B cell (primary cell): ENCODE measurements at regions of chr19 and their contacts with region 1.

Region 1: GRCh38 chr19:14577885-14578427 is 4.9 kb upstream of the CLEC17A start:
- DNase-seq: peak; percentile 75
- ATAC-seq: peak; percentile 49
- H3K4me3 ChIP-seq: no peak overlapping the region
- H3K4me3 Mint-ChIP-seq: peak overlapping the region; percentile 74
- H3K27ac ChIP-seq: peak overlapping the region; percentile 42 to 72
- H3K27ac Mint-ChIP-seq: peak overlapping the region; percentile 94
- H3K4me1 ChIP-seq: peaks cover 65 to 82% of the 10 kb centered on the region in 2 donors
- H3K4me1 Mint-ChIP-seq: peaks cover 58% of the 10 kb centered on the region
- H3K27me3 ChIP-seq: no peaks in the 10 kb centered on the region
- H3K27me3 Mint-ChIP-seq: no peaks in the 10 kb centered on the region
- CTCF ChIP-seq: no peak

Region 2: DNA sequence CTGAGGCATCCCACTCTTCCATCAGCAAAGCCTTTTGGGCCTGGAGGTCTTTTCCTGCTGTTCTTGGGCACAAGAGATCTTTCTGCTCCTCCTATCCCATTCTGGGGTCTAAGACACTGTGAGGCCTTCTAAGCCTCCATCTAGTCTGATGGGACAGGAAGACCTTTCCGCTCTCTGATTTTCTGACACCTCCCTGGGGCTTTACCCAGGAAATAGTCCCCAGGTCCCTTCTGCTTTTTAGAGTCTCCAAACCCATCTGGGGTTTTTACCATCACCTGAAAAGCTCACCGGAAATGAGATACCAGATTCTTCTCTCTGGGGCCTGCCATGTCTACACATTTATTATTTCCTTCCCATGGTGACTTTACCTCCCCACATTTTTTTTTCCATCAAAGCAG is 26.0 kb after region 1 on chr19:
- CTCF ChIA-PET with region 1: interaction called, 56 read pairs
- POLR2A ChIA-PET with region 1: interaction called, 6 read pairs
- intact Hi-C with region 1: loop called (anchors 1 kb)
- DNase-seq: peak; percentile 89
- ATAC-seq: peak; percentile 90
- H3K4me3 ChIP-seq: peak overlapping the region in 2 of 5 experiments; percentile 22 to 26
- H3K4me3 Mint-ChIP-seq: peak overlapping the region; percentile 67
- H3K27ac ChIP-seq: peak overlapping the region; percentile 85 to 94
- H3K27ac Mint-ChIP-seq: peak overlapping the region; percentile 83
- H3K4me1 ChIP-seq: peaks cover 54% of the 10 kb centered on the region in 2 donors
- H3K4me1 Mint-ChIP-seq: peaks cover 63% of the 10 kb centered on the region
- H3K27me3 ChIP-seq: no peaks in the 10 kb centered on the region
- H3K27me3 Mint-ChIP-seq: no peaks in the 10 kb centered on the region
- CTCF ChIP-seq: no peak

Region 3: DNA sequence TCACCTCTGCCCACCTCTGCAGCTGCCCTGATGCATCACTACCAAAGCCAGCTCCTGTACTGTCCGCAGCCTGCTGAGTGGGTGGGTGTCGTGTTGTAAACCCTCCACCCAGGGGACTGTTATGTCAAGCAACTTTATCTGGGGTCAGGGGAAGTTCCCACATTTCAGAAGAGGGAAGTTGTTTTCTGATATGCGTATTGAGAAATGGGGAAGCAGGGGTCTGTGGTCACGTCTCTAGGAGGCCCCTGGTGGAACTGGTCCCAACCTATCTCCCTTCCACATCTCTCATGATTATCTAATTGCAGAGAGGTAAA is 36.1 kb after region 1 on chr19:
- CTCF ChIA-PET with region 1: interaction called, 54 read pairs
- POLR2A ChIA-PET with region 1: no interaction called
- intact Hi-C with region 1: loop called (anchors 1 kb)
- DNase-seq: peak; percentile 91
- ATAC-seq: peak; percentile 88
- H3K4me3 ChIP-seq: peak overlapping the region in 1 of 5 experiments; percentile 38
- H3K4me3 Mint-ChIP-seq: peak overlapping the region; percentile 89
- H3K27ac ChIP-seq: peak overlapping the region; percentile 91 to 92
- H3K27ac Mint-ChIP-seq: peak overlapping the region; percentile 99
- H3K4me1 ChIP-seq: peaks cover 53 to 64% of the 10 kb centered on the region in 2 donors
- H3K4me1 Mint-ChIP-seq: peaks cover 49% of the 10 kb centered on the region
- H3K27me3 ChIP-seq: no peaks in the 10 kb centered on the region
- H3K27me3 Mint-ChIP-seq: no peaks in the 10 kb centered on the region
- CTCF ChIP-seq: peak; percentile 25

Region 4: DNA sequence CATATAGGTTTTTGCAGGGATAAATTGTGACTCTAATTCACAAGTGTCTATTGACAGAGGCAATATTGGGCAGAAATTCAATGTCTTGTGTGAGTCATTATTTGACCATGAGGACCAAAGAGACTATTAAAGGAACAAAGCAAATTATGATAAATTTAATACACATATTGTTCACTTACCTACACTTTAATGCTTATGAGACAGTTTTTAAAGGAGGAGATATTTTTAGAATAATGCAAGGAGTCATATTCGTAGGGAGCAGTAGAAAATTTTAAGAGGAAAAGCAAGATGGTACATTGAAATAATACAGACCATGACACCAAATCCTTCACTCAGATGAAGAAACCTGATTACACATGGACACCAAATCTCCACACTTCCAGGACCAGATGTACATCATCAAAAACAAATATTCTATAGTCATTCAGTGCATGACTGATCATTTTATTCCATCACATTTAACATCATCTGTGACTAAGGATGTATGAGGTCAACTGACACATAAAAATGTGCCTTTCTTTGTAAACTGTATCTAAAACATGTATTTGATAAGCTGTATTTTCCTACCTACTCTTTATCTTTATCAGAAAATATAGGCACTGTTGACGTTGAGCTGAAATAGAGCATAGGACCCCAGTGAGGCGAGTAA is 312.2 kb after region 1 on chr19:
- CTCF ChIA-PET with region 1: interaction called, 5 read pairs
- POLR2A ChIA-PET with region 1: no interaction called
- intact Hi-C with region 1: loop called (anchors 2 kb)
- DNase-seq: no peak
- ATAC-seq: no peak
- H3K4me3 ChIP-seq: no peak overlapping the region
- H3K4me3 Mint-ChIP-seq: no peak overlapping the region
- H3K27ac ChIP-seq: peak overlapping the region in 1 of 2 donors; percentile 78
- H3K27ac Mint-ChIP-seq: peak overlapping the region; percentile 82
- H3K4me1 ChIP-seq: peaks cover 17% of the 10 kb centered on the region in 2 donors
- H3K4me1 Mint-ChIP-seq: peaks cover 33% of the 10 kb centered on the region
- H3K27me3 ChIP-seq: peaks cover 0 to 7% (median 1%) of the 10 kb centered on the region in 4 experiments
- H3K27me3 Mint-ChIP-seq: peaks cover 20% of the 10 kb centered on the region
- CTCF ChIP-seq: no peak